ENCODE measurements at regions of chr1 and their contacts with region 1.

Region 1: GRCh38 chr1:6784560-6785317 is 515 bp upstream of the CAMTA1 start:
- DNase-seq: peak; percentile 94 to 100 (median 100)
- ATAC-seq: peak; percentile 90
- H3K4me3 ChIP-seq: peak overlapping the region; percentile 79
- H3K4me3 Mint-ChIP-seq: peak overlapping the region; percentile 85 to 96 (median 90)
- H3K27ac ChIP-seq: peak overlapping the region; percentile 94
- H3K27ac Mint-ChIP-seq: peak overlapping the region; percentile 80 to 96 (median 93)
- H3K4me1 ChIP-seq: peaks cover 25 to 26% of the 10 kb centered on the region in 2 donors
- H3K4me1 Mint-ChIP-seq: peaks cover 29 to 45% (median 44%) of the 10 kb centered on the region in 7 donors
- H3K27me3 ChIP-seq: no peaks in the 10 kb centered on the region
- H3K27me3 Mint-ChIP-seq: peaks cover 0 to 3% (median 0%) of the 10 kb centered on the region in 5 donors

Region 2: DNA sequence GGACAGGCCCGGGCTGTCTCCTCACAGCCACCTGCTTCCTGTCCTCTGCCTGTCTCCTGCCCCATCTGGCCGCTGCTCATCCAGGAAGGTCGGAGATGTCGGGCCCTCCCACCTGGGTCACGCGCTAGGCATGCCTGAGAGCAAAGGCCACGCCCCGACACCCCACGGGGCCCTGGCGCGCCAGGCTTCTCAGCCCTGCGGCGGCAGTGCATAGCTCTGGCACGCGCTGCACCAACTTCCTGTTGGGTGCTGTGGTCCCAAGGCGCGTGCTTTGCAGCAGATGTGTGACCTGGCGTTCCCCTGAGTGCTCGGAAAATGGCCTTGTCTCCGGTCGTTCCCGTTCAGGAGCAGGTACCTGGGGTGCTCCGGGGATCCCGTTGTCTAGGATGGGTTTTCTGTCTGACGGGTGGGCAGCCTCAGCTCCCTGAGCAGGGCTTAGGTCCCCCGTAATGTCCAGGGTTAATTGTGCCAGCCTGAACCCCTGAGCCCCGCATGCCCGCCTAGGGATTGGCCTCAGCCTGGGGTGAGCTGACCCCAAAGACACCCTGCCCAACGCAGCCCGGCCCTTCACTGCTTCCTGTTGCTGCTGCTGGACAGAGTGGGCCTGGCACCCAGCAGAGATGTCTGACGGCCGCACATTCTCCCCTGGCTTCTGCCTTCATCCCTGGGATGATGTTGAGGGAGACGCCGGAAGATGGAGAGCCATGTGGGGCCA is 758.5 kb before region 1 on chr1:
- CTCF ChIA-PET with region 1: no interaction called
- POLR2A ChIA-PET with region 1: no interaction called
- intact Hi-C with region 1: loop called in 1 of 2 experiments (anchors 10 kb)
- DNase-seq: peak; percentile 82 to 92 (median 89)
- ATAC-seq: peak; percentile 92
- H3K4me3 ChIP-seq: peak overlapping the region; percentile 89
- H3K4me3 Mint-ChIP-seq: peak overlapping the region; percentile 88 to 99 (median 95)
- H3K27ac ChIP-seq: peak overlapping the region; percentile 84
- H3K27ac Mint-ChIP-seq: peak overlapping the region; percentile 87 to 98 (median 96)
- H3K4me1 ChIP-seq: peaks cover 42 to 49% of the 10 kb centered on the region in 2 donors
- H3K4me1 Mint-ChIP-seq: peaks cover 45 to 56% (median 51%) of the 10 kb centered on the region in 7 donors
- H3K27me3 ChIP-seq: no peaks in the 10 kb centered on the region
- H3K27me3 Mint-ChIP-seq: no peaks in the 10 kb centered on the region

Region 3: GRCh38 chr1:6393400-6394187 is 391.1 kb before region 1 on chr1 and contains the start of gene ACOT7:
- CTCF ChIA-PET with region 1: no interaction called
- POLR2A ChIA-PET with region 1: no interaction called
- intact Hi-C with region 1: loop called in 1 of 2 experiments (anchors 1 kb)
- DNase-seq: peak; percentile 84 to 93 (median 89)
- ATAC-seq: peak; percentile 96
- H3K4me3 ChIP-seq: peak within 1 kb of the TSS; percentile 75
- H3K4me3 Mint-ChIP-seq: peak within 1 kb of the TSS; percentile 87 to 97 (median 90)
- H3K27ac ChIP-seq: peak within 1 kb of the TSS; percentile 88
- H3K27ac Mint-ChIP-seq: peak within 1 kb of the TSS; percentile 85 to 98 (median 95)
- H3K4me1 ChIP-seq: peaks cover 13 to 22% of the 10 kb centered on the region in 2 donors
- H3K4me1 Mint-ChIP-seq: peaks cover 16 to 47% (median 32%) of the 10 kb centered on the region in 7 donors
- H3K27me3 ChIP-seq: no peaks in the 10 kb centered on the region
- H3K27me3 Mint-ChIP-seq: peaks cover 0 to 5% (median 0%) of the 10 kb centered on the region in 5 donors
- total RNA-seq, gene ACOT7: 2.5 to 75.6 (median 3.4) TPM

Region 4: DNA sequence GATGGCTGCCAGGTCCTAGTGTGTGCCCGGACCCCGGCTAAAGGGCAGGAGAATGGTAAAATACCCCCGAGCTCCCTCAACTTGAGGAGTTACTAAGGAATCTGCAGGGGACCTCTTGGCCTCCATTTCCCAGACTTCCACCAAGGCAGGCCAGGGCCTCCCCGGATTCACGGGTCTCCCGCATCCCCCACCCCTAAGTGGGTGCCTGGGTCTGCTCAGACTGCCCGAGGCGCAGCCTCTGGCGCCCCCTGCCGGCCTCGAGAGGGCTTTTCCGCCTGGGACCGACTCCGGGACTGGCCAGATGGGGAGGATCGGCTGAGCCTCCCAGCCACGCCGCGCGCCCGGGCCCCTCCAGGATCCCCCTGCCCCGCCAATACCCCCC is 294.9 kb before region 1 on chr1:
- CTCF ChIA-PET with region 1: no interaction called
- POLR2A ChIA-PET with region 1: no interaction called
- intact Hi-C with region 1: loop called in 1 of 2 experiments (anchors 2 kb)
- DNase-seq: peak; percentile 66 to 87 (median 77)
- ATAC-seq: peak; percentile 77
- H3K4me3 ChIP-seq: peak overlapping the region; percentile 80
- H3K4me3 Mint-ChIP-seq: peak overlapping the region; percentile 63 to 87 (median 81)
- H3K27ac ChIP-seq: peak overlapping the region; percentile 71
- H3K27ac Mint-ChIP-seq: peak overlapping the region in 1 of 9 donors; percentile 79
- H3K4me1 ChIP-seq: peaks cover 13 to 18% of the 10 kb centered on the region in 2 donors
- H3K4me1 Mint-ChIP-seq: peaks cover 20 to 37% (median 31%) of the 10 kb centered on the region in 7 donors
- H3K27me3 ChIP-seq: peaks cover 0 to 6% of the 10 kb centered on the region in 2 donors
- H3K27me3 Mint-ChIP-seq: peaks cover 6 to 24% (median 9%) of the 10 kb centered on the region in 5 donors

Region 5: DNA sequence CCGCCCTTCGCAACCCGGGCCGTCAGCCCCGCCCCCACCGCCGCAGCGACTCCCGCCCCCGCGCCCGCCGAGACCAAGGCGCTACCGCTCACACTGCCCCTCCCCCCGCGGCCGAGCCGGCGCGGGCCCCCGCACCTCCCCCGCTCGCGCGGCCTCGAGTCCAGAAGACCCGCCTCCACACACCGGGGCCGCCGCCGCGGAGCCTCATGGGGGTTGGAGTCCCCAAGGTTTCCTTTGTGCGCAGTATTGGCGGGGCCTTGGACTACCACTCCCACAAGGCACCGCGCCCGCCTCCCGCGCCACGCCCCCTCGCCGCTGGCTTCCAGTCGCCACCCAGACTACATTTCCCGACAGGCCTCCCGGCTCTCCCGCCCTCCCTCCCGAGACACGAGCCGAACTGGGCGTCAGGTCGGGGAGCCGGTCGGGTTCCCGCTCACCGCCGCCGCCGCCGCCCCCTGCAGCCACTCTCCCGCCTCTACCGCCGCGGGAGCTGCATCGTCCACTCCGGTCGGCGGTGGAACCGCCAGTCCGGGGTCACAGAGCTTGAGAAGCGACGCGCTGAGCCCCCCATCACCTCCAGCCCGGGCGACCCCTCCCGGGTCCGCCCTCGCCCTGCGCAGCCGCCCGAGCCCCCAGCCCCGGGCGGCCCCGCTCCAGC is 171.2 kb before region 1 on chr1 and contains the start of gene PHF13:
- CTCF ChIA-PET with region 1: no interaction called
- POLR2A ChIA-PET with region 1: no interaction called
- intact Hi-C with region 1: loop called in 1 of 2 experiments (anchors 1 kb)
- DNase-seq: peak; percentile 97 to 99 (median 98)
- ATAC-seq: peak; percentile 98
- H3K4me3 ChIP-seq: peak within 1 kb of the TSS; percentile 53
- H3K4me3 Mint-ChIP-seq: peak within 1 kb of the TSS; percentile 88 to 97 (median 93)
- H3K27ac ChIP-seq: peak within 1 kb of the TSS; percentile 82
- H3K27ac Mint-ChIP-seq: peak within 1 kb of the TSS; percentile 69 to 95 (median 88)
- H3K4me1 ChIP-seq: peaks cover 0 to 14% of the 10 kb centered on the region in 2 donors
- H3K4me1 Mint-ChIP-seq: peaks cover 16 to 37% (median 25%) of the 10 kb centered on the region in 7 donors
- H3K27me3 ChIP-seq: no peaks in the 10 kb centered on the region
- H3K27me3 Mint-ChIP-seq: peaks cover 0 to 2% (median 0%) of the 10 kb centered on the region in 5 donors
- total RNA-seq, gene PHF13: 7.7 to 14.3 (median 12.2) TPM

Region 6: GRCh38 chr1:6653436-6654290 is 131.1 kb before region 1 on chr1:
- CTCF ChIA-PET with region 1: no interaction called
- POLR2A ChIA-PET with region 1: no interaction called
- intact Hi-C with region 1: no loop called
- DNase-seq: no peak
- ATAC-seq: no peak
- H3K4me3 ChIP-seq: no peak overlapping the region
- H3K4me3 Mint-ChIP-seq: no peak overlapping the region
- H3K27ac ChIP-seq: no peak overlapping the region
- H3K27ac Mint-ChIP-seq: no peak overlapping the region
- H3K4me1 ChIP-seq: no peaks in the 10 kb centered on the region
- H3K4me1 Mint-ChIP-seq: peaks cover 0 to 18% (median 13%) of the 10 kb centered on the region in 7 donors
- H3K27me3 ChIP-seq: no peaks in the 10 kb centered on the region
- H3K27me3 Mint-ChIP-seq: no peaks in the 10 kb centered on the region

Region 7: DNA sequence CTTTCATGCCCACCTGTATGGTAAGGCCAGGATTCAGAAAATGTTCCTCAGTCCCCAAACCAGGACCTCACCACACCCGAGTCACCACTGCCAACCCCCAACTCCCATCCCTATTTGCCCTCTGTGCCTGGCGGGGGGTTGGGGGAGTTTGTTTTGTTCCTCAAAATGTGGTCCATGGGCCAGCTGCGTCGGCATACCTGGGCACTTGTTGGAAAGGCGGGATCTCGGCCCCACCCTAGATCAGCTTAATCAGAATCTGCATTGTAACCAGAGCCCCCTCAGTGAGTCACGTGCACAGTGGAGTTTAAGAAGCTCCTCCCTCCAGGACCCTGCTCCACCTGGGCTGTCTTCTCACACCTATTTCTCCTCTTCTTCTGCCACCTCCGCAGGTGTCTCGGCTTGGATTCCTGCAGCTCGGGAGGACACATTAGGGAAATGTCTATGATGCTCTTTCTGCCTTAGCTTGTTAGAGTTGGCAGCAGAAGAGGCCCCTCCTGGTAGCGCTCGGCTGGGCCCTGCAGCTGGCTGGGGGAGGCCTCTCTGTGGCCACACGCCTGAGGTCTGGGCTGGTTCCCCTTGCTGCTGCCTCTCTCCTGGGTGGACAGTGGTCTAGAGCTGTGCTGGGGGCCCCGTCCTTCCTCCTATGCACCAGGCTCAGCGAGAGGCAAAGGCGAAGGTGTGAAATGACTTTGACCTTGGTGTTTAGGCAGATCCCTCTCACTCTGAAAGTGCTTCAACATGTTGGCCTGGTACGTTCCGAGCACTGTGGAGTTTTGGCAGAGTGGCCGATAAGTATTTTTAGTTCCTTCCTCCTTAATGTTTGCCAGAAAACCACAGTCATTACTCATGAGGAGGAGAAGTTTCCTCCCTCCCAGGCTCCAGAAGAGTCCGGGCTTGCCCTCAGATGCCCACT is 41.3 kb before region 1 on chr1:
- CTCF ChIA-PET with region 1: interaction called, 4 read pairs
- POLR2A ChIA-PET with region 1: interaction called, 3 read pairs
- intact Hi-C with region 1: loop called (anchors 1 kb)
- DNase-seq: peak in 8 of 9 donors; percentile 25 to 69 (median 38)
- ATAC-seq: peak; percentile 63
- H3K4me3 ChIP-seq: no peak overlapping the region
- H3K4me3 Mint-ChIP-seq: peak overlapping the region in 2 of 10 donors; percentile 26 to 36
- H3K27ac ChIP-seq: no peak overlapping the region
- H3K27ac Mint-ChIP-seq: peak overlapping the region in 4 of 9 donors; percentile 1 to 85 (median 37)
- H3K4me1 ChIP-seq: no peaks in the 10 kb centered on the region
- H3K4me1 Mint-ChIP-seq: peaks cover 6 to 12% (median 9%) of the 10 kb centered on the region in 7 donors
- H3K27me3 ChIP-seq: no peaks in the 10 kb centered on the region
- H3K27me3 Mint-ChIP-seq: peaks cover 0 to 16% (median under 1%) of the 10 kb centered on the region in 5 donors

Region 8: DNA sequence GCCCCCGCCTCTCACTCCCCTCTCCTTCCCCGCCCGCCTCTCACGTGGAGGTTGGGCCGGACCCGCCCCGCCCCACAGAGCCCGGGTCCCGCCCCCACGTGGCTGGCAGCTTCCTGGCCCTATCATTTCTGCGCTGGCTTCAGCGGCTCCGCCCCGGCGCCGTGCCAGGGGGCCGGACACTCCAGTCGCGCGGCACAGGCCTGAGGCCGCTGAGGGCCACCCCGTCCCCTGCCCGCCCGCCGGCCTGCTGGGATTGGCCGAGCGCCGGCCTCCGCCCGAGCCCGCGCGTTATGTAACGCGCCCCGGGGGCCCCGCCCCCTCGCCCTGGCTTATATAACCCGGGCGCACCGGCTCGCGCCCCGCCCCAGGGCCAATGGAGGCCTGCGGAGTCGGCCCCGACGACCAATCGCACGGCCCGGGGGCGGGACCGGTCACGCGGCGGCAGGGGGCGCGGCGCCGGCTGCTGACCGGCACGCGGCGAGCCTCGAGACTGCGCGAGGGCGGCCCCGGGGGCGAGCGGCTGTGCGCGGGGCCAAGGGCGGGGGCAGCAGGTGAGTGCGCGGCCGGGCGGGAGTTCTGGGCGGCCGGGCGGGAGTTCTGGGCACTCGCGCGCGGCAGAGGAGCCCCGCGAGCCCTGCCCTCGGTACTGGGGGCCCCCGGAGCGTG is 999.2 kb after region 1 on chr1 and contains the start of gene PER3:
- CTCF ChIA-PET with region 1: no interaction called
- POLR2A ChIA-PET with region 1: no interaction called
- intact Hi-C with region 1: loop called in 1 of 2 experiments (anchors 2 kb)
- DNase-seq: peak; percentile 84 to 97 (median 94)
- ATAC-seq: peak; percentile 93
- H3K4me3 ChIP-seq: peak within 1 kb of the TSS; percentile 58
- H3K4me3 Mint-ChIP-seq: peak within 1 kb of the TSS; percentile 67 to 85 (median 76)
- H3K27ac ChIP-seq: peak within 1 kb of the TSS; percentile 99
- H3K27ac Mint-ChIP-seq: peak within 1 kb of the TSS in 8 of 9 donors; percentile 63 to 91 (median 82)
- H3K4me1 ChIP-seq: peaks cover 8 to 17% of the 10 kb centered on the region in 2 donors
- H3K4me1 Mint-ChIP-seq: peaks cover 18 to 39% (median 28%) of the 10 kb centered on the region in 7 donors
- H3K27me3 ChIP-seq: no peaks in the 10 kb centered on the region
- H3K27me3 Mint-ChIP-seq: peaks cover 0 to 16% (median 0%) of the 10 kb centered on the region in 5 donors
- total RNA-seq, gene PER3: 2.2 to 10.4 (median 5.1) TPM